WTC11 (cell line): ENCODE measurements at regions of chr3 and their contacts with region 1.

Region 1: DNA sequence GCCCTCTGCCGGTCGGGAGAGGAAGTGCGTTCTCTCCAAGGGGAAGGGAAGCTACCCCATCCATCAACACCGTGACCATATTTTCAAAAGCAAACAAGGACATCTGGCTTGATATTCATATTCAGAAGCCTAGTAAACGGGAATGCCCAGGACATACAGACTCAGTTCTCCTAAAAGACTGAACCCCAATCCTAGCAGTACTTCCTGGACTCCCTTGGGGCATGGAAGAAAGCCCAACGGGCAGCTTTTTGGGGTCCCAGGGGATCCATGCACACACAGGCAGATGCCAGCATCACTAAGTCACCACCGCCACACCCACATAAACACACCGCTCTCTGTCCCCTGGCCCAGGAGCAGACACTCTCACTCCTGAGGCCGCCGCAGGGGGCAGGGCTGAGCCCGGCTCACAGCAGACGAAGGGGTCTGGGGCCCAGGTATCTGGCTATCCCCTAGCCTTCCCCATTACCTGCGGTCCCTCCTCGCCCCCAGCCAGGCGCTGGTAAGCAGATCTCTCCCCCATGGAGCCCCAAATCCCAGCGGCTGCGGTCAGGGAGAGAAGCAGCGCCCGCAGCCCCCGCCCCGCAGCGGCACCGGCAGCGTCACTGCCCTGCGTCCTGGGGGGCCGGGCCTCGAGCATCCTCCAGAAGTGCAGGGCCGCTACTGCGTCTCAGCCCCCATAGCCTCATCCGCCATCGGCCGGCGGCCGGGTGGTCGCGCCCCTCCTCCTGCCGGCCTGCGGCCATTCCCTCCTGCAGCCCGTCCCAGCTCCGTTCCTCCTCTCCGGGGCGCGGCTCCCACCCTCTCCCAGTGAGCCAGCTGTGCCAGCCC is 13.4 kb downstream of the TNK2 start:
- DNase-seq: no peak
- ATAC-seq: peak; percentile 43
- H3K4me3 Mint-ChIP-seq: peak overlapping the region; percentile 83
- H3K27ac Mint-ChIP-seq: no peak overlapping the region
- H3K4me1 Mint-ChIP-seq: peaks cover 41% of the 10 kb centered on the region
- H3K27me3 Mint-ChIP-seq: no peaks in the 10 kb centered on the region
- CTCF ChIP-seq: peak; percentile 94

Region 2: GRCh38 chr3:195716865-195717210 is 178.2 kb before region 1 on chr3:
- CTCF ChIA-PET with region 1: interaction called, 13 read pairs
- POLR2A ChIA-PET with region 1: no interaction called
- DNase-seq: no peak
- ATAC-seq: no peak
- H3K4me3 Mint-ChIP-seq: no peak overlapping the region
- H3K27ac Mint-ChIP-seq: no peak overlapping the region
- H3K4me1 Mint-ChIP-seq: peaks cover 36% of the 10 kb centered on the region
- H3K27me3 Mint-ChIP-seq: peaks cover 6% of the 10 kb centered on the region
- CTCF ChIP-seq: no peak

Region 3: DNA sequence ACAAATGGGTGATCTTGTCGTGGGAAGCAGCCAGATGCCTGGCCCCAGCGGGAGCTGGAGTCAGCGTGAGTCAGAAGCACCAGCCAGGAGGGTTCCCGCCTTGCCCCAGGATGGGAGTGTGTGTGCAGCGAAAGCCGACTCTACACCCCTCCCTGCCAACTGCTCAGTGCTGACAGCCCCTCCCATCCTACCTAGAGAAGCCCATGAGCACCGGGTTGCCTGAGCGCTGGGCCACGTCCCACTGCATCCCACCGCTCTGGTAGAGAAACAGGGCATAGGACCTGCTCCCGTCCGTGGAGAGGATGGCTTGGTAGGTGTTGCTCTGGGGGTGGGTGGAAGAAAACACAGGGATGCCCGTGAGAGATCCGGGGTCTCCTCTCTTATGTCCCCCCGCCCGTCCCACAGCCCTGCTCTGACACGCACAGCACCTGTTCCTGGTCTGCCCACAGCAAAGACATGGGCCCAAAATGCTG is 126.1 kb before region 1 on chr3:
- CTCF ChIA-PET with region 1: no interaction called
- POLR2A ChIA-PET with region 1: no interaction called
- DNase-seq: no peak
- ATAC-seq: peak; percentile 36; the same call in 1 of the 2 replicates
- H3K4me3 Mint-ChIP-seq: no peak overlapping the region
- H3K27ac Mint-ChIP-seq: no peak overlapping the region; the same call in 1 of the 2 replicates
- H3K4me1 Mint-ChIP-seq: no peaks in the 10 kb centered on the region
- H3K27me3 Mint-ChIP-seq: no peaks in the 10 kb centered on the region; the same call in 1 of the 2 replicates
- CTCF ChIP-seq: no peak

Region 4: DNA sequence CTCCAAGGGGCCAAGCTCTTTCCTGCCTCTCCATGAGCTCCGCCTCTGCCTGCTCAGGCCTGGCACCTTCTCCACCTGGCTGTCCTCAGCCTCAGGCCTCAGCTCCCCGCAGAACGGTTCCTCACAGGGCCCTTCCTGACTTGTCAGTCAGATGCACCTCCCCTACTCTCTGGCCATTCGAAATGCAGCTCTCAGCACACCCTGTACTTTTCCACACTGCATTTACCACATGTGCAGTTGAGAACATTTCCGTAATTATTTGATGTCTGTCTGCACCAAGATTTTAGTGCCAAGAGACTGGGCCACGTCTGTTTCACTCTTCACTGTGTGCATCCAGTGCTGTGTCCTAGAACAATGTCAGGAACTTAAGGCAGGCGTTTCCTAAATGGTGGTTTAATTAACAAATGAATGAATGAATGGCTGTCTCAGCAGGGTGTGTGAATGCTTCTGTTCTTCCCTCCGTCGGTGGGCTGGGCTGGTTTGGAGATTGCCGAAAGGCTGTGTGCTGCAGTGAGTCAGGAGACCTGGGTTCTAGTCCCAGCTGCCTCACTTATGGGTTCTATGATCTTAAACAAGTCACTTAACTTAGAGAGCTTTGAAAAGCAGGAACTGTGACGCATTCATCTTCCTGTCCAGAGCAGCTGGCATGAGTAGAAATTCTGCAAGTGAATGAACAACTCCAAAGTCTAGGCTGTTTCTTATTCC is 88.6 kb before region 1 on chr3:
- CTCF ChIA-PET with region 1: interaction called, 12 read pairs
- POLR2A ChIA-PET with region 1: no interaction called
- DNase-seq: peak; percentile 73
- ATAC-seq: peak; percentile 77
- H3K4me3 Mint-ChIP-seq: peak overlapping the region; percentile 39
- H3K27ac Mint-ChIP-seq: peak overlapping the region; percentile 98
- H3K4me1 Mint-ChIP-seq: peaks cover 84% of the 10 kb centered on the region
- H3K27me3 Mint-ChIP-seq: peaks cover 4% of the 10 kb centered on the region
- CTCF ChIP-seq: no peak

Region 5: GRCh38 chr3:195909644-195910508 is 14.9 kb after region 1 on chr3:
- CTCF ChIA-PET with region 1: interaction called, 102 read pairs
- POLR2A ChIA-PET with region 1: interaction called, 6 read pairs
- DNase-seq: peak; percentile 79
- ATAC-seq: peak; percentile 58
- H3K4me3 Mint-ChIP-seq: peak overlapping the region; percentile 76
- H3K27ac Mint-ChIP-seq: peak overlapping the region; percentile 23; the same call in 1 of the 2 replicates
- H3K4me1 Mint-ChIP-seq: peaks cover 45% of the 10 kb centered on the region
- H3K27me3 Mint-ChIP-seq: peaks cover 9% of the 10 kb centered on the region; the same call in 1 of the 2 replicates
- CTCF ChIP-seq: no peak

Region 6: GRCh38 chr3:195921334-195921791 is 26.4 kb after region 1 on chr3:
- CTCF ChIA-PET with region 1: interaction called, 102 read pairs
- POLR2A ChIA-PET with region 1: no interaction called
- DNase-seq: no peak
- ATAC-seq: peak; percentile 65
- H3K4me3 Mint-ChIP-seq: no peak overlapping the region
- H3K27ac Mint-ChIP-seq: no peak overlapping the region
- H3K4me1 Mint-ChIP-seq: peaks cover 9% of the 10 kb centered on the region
- H3K27me3 Mint-ChIP-seq: peaks cover 5% of the 10 kb centered on the region; the same call in 1 of the 2 replicates
- CTCF ChIP-seq: no peak